HCT116 (cell line): ENCODE measurements at regions of chrX and their contacts with region 1.

Region 1: GRCh38 chrX:119791438-119792231 is at the start of gene RPL39:
- DNase-seq: peak; percentile 76
- ATAC-seq: peak; percentile 92
- H3K4me3 ChIP-seq: peak within 1 kb of the TSS; percentile 78 to 85
- H3K27ac ChIP-seq: peak within 1 kb of the TSS; percentile 95
- H3K4me1 ChIP-seq: peaks cover 0 to 27% of the 10 kb centered on the region in 2 experiments; a peak in 2 of 4 replicates
- H3K27me3 ChIP-seq: no peaks in the 10 kb centered on the region
- CTCF ChIP-seq: no peak
- POLR2A ChIP-seq: peak; percentile 38
- RAD21 ChIP-seq: no peak
- total RNA-seq, gene RPL39: 1,940 TPM

Region 2: DNA sequence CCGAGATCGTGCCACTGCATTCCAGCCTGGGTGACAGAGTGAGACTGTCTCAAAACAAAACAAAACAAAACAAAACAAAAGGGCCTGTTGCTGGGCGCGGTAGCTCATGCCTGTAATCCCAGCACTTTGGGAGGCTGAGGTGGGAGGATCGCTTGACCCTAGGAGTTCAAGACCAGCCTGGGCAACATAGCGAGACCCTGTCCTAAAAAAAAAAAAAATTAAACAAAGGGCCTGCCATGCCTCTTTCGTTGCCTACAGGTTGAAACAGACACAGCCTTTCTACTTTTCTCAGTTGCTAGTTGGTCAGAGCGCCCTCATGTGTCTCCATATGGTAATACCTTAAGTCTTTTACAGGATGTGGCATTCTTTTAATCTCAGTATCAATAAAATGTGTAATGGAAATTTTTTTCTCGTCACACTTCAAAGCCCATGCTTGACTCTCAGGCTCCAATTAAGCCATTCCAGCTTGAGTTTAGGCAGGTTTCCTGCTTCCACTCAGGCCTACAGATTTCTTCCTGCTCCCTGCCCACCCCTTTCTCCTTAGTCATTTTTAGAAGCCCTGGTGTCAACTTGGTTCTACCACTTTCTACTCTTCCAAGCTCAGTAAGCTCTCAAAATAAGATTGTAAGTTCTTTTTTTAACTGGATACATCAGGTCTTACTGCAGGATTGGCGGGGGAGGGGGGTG is 37.9 kb before region 1 on chrX:
- CTCF ChIA-PET with region 1: interaction called, 3 read pairs
- POLR2A ChIA-PET with region 1: interaction called, 11 read pairs
- RAD21 ChIA-PET with region 1: no interaction called
- intact Hi-C with region 1: no loop called
- DNase-seq: peak; percentile 48
- ATAC-seq: no peak
- H3K4me3 ChIP-seq: no peak overlapping the region
- H3K27ac ChIP-seq: no peak overlapping the region
- H3K4me1 ChIP-seq: peaks cover 3 to 20% of the 10 kb centered on the region in 2 experiments; a peak in 3 of 4 replicates
- H3K27me3 ChIP-seq: no peaks in the 10 kb centered on the region
- CTCF ChIP-seq: peak; percentile 45 to 53 (median 48); a peak in 5 of 6 replicates
- POLR2A ChIP-seq: no peak
- RAD21 ChIP-seq: peak; percentile 52

Region 3: DNA sequence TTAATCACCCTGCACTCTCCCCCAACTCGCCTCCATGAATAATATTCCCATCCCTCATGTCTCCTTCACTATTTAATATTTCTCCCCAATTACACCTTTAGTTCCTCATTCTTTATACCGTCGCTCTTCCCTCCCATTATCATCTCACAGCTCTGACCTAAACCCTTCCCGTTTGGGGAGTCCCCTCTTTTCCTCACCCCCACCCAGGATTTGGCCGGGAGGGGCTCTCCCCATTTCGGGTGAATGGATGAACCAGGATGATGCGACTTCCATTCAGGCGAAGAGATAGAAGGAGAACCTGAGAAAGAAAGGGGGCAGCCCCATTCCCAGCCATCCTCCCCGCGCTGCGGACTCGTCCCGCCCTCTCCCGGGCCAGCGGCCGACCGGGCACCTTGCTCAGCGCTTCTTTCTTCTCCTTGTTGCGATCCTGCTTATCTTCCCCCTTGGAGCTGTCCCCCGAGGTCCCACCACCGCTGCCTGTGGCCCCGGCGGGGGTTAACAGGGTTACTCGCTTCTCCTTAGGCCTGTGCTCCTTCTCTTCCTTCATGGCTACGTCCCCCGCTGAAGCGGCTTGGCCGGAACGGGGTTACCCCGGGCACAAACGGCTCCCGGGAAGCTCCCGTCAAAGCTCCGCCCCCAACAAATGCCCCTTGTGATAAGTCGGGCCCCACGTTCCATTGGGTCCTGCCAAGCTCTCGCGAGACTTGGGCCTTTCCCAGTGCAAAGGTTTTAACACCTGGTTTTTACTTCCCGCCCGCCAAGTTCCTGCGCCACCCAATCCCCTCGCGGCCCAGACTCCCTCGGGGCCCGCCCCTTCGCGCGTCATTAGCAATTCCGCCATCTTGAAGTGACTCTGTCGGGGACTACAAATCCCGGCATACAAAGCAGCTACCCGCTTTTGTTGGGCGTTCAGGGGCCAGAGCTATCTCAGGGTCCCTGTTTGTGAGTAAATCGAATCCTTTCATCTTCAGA is 61.0 kb after region 1 on chrX and contains the start of gene UPF3B:
- CTCF ChIA-PET with region 1: no interaction called
- POLR2A ChIA-PET with region 1: interaction called, 22 read pairs
- RAD21 ChIA-PET with region 1: no interaction called
- intact Hi-C with region 1: loop called (anchors 5 kb)
- DNase-seq: peak; percentile 95
- ATAC-seq: peak; percentile 96
- H3K4me3 ChIP-seq: peak within 1 kb of the TSS; percentile 81 to 87
- H3K27ac ChIP-seq: peak within 1 kb of the TSS; percentile 76
- H3K4me1 ChIP-seq: peaks cover 0 to 8% of the 10 kb centered on the region in 2 experiments; a peak in 3 of 4 replicates
- H3K27me3 ChIP-seq: no peaks in the 10 kb centered on the region
- CTCF ChIP-seq: no peak
- POLR2A ChIP-seq: no peak
- RAD21 ChIP-seq: no peak
- total RNA-seq, gene UPF3B: 11.9 TPM

Region 4: DNA sequence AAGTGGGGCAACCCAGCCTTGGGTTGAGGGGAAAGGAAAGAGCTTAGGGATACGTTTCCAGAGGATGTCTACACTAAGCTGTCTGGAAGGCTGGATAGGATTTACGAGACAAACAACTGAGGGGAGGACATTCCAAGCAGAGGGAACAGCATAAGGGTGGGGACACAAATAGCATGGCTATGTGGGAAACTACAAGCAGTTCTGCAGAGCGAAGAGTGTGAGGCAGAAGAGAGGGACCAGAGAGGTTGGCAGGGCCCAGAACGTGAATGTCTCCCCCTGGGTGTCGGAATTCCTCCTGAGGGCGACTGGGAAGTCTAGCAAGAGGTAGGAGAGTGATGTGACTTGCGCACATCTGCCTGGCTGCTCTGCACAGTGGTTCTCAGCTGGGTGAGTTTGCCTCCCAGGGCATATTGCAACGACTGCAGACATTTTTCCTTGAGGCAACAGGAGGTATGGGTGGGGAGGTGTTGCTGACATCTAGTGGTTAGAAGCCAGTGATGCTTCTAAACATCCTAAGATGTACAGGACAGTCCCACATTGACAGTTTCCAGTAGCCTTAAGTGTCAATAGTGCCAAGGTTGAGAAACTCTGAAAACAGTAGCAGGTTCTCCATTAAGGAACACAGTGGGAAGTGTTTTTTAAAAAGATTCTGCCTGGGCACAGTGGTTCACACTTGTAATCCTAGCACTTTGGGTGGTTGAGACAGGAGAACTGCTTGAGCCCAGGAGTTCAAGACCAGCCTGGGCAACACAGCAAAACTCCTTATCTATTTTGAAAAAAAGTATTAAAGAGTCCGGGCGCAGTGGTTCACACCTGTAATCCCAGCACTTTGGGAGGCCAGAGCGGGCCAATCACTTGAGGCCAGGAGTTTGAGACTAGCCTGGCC is 89.2 kb after region 1 on chrX:
- CTCF ChIA-PET with region 1: no interaction called
- POLR2A ChIA-PET with region 1: no interaction called
- RAD21 ChIA-PET with region 1: no interaction called
- intact Hi-C with region 1: loop called (anchors 5 kb)
- DNase-seq: peak; percentile 23
- ATAC-seq: peak; percentile 94
- H3K4me3 ChIP-seq: no peak overlapping the region
- H3K27ac ChIP-seq: no peak overlapping the region
- H3K4me1 ChIP-seq: no peaks in the 10 kb centered on the region
- H3K27me3 ChIP-seq: no peaks in the 10 kb centered on the region
- CTCF ChIP-seq: peak; percentile 25 to 70 (median 57); a peak in 5 of 6 replicates
- POLR2A ChIP-seq: no peak
- RAD21 ChIP-seq: peak; percentile 56